Activated naive CD4-positive, alpha-beta T cell treated with anti-CD3 and anti-CD28 coated beads for 36 hours (primary cell): ENCODE measurements at regions of chr1 and their contacts with region 1.

Region 1: DNA sequence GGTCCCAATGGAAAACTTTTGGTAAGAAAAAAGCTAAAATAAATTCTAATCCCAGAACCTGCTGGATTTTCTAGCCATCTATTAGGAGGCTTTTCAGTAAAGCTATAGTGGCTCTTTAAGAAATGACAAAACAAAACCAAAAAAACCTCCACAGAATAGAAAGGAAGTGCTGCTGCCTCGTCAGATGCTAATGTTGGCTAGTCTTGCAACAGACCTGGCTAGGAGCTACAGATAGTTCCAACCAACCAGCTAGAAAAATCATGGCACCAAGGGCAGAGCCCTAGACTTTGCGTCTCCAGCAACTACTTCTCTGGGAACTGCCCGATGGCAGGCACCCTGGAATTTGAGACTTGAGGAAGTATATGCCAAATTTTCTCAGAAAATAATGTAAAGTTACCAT is 7.6 kb downstream of the CD101 start:
- DNase-seq: peak; percentile 48
- H3K4me3 Mint-ChIP-seq: peak overlapping the region; percentile 30
- H3K27ac Mint-ChIP-seq: peak overlapping the region; percentile 72
- H3K4me1 Mint-ChIP-seq: peaks cover 60% of the 10 kb centered on the region
- H3K27me3 Mint-ChIP-seq: no peaks in the 10 kb centered on the region

Region 2: GRCh38 chr1:116763787-116764465 is 245.2 kb before region 1 on chr1:
- CTCF ChIA-PET with region 1: no interaction called
- intact Hi-C with region 1: loop called (anchors 5 kb)
- DNase-seq: peak; percentile 68
- H3K4me3 Mint-ChIP-seq: peak overlapping the region; percentile 100
- H3K27ac Mint-ChIP-seq: peak overlapping the region; percentile 100
- H3K4me1 Mint-ChIP-seq: peaks cover 87% of the 10 kb centered on the region
- H3K27me3 Mint-ChIP-seq: no peaks in the 10 kb centered on the region

Region 3: GRCh38 chr1:116987256-116987555 is 21.9 kb before region 1 on chr1:
- CTCF ChIA-PET with region 1: no interaction called
- intact Hi-C with region 1: loop called (anchors 2 kb)
- DNase-seq: peak; percentile 83
- H3K4me3 Mint-ChIP-seq: peak overlapping the region; percentile 68
- H3K27ac Mint-ChIP-seq: peak overlapping the region; percentile 91
- H3K4me1 Mint-ChIP-seq: peaks cover 60% of the 10 kb centered on the region
- H3K27me3 Mint-ChIP-seq: no peaks in the 10 kb centered on the region

Region 4: GRCh38 chr1:117038236-117038635 is 29.1 kb after region 1 on chr1:
- CTCF ChIA-PET with region 1: no interaction called
- intact Hi-C with region 1: no loop called
- DNase-seq: no peak
- H3K4me3 Mint-ChIP-seq: no peak overlapping the region
- H3K27ac Mint-ChIP-seq: no peak overlapping the region
- H3K4me1 Mint-ChIP-seq: peaks cover 5% of the 10 kb centered on the region
- H3K27me3 Mint-ChIP-seq: no peaks in the 10 kb centered on the region

Region 5: GRCh38 chr1:117051224-117052064 is 42.3 kb after region 1 on chr1:
- CTCF ChIA-PET with region 1: interaction called, 5 read pairs
- intact Hi-C with region 1: loop called (anchors 1 kb)
- DNase-seq: peak; percentile 69
- H3K4me3 Mint-ChIP-seq: peak overlapping the region; percentile 45
- H3K27ac Mint-ChIP-seq: peak overlapping the region; percentile 28
- H3K4me1 Mint-ChIP-seq: peaks cover 61% of the 10 kb centered on the region
- H3K27me3 Mint-ChIP-seq: no peaks in the 10 kb centered on the region

Region 6: DNA sequence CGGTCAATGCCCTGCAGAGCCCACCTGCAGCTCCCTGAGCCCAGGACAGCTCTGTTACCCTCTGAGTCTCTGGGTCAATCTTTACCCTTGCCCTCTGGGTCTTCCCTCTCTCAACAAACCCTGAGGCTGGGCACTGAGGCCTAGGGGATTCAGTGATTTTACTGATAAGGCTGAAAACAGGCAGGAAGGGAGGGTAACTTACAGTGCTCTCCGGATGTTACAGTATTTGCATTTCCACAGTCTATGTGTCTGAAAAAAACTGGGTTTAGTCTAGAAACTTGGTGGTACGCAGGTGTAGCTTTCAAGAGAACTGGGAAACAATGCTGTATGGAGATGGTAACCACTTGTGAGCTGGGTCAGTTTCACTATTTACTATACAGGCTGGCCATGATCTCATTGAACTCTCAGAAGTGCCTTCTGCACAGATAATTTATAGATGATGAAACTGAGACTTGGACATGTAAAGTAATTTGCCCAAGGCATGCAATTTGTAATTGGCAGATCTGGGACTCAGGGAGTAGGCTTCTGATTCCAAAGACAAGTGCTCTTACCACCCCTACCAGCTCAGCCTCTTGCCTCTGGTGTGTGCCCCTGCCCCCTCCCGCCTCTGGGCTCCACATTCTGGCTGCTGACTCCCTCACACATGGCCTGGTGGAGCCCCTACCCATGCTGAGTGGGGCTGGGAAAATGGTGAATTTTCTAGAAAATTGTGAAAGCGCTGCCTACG is 645.5 kb after region 1 on chr1:
- CTCF ChIA-PET with region 1: no interaction called
- intact Hi-C with region 1: loop called (anchors 5 kb)
- DNase-seq: no peak
- H3K4me3 Mint-ChIP-seq: no peak overlapping the region
- H3K27ac Mint-ChIP-seq: no peak overlapping the region
- H3K4me1 Mint-ChIP-seq: peaks cover 72% of the 10 kb centered on the region
- H3K27me3 Mint-ChIP-seq: peaks cover 11% of the 10 kb centered on the region